ENCODE measurements at regions of chr14 and their contacts with region 1.

Region 1: DNA sequence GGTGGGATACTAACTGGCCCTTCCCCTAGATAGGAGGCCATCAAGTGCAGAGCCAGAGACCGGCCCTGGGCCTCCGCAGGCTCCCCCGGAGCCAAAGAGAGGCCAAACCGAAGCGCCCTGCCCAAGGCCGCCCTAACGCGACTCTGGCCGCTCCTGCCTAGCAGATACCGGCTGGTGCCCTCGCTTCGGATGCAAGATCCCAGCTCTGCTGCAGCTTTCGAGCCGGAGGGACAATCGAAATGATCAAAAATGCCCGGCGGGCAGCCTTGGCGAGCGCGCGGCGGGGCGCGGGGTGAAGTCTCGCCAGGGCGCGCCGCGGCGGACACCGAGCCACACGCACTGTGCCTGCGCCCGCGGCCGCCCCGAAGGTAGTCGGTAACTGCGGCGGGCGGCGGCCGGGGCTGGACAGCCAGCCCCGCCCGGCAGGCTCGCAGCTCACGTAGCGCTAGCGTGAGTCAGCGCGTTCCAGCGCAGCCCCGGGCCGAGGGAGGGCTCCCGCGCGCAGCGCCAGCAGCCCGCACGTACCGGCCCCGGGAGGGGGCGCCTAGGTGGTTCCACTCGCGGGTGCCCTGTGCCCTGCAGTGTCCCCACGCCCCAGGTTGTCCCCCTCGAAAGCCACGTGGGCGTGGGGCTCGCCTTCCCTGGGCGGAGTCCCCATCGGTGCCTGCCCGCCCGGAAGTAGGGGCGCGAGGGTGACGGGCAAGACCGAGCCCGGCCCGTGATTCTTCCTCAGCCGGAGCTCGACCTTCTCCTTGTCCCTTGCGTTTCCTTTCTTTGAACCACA is 109.2 kb upstream of the EGLN3 start:
- DNase-seq: peak; percentile 82 to 88
- H3K4me3 ChIP-seq: peak overlapping the region; percentile 65
- H3K4me3 Mint-ChIP-seq: peak overlapping the region; percentile 89
- H3K27ac Mint-ChIP-seq: peak overlapping the region; percentile 96
- H3K4me1 ChIP-seq: peaks cover 19% of the 10 kb centered on the region
- H3K4me1 Mint-ChIP-seq: peaks cover 7% of the 10 kb centered on the region
- H3K27me3 ChIP-seq: no peaks in the 10 kb centered on the region
- H3K27me3 Mint-ChIP-seq: no peaks in the 10 kb centered on the region
- CTCF ChIP-seq: peak in 1 of 2 experiments; percentile 18

Region 2: DNA sequence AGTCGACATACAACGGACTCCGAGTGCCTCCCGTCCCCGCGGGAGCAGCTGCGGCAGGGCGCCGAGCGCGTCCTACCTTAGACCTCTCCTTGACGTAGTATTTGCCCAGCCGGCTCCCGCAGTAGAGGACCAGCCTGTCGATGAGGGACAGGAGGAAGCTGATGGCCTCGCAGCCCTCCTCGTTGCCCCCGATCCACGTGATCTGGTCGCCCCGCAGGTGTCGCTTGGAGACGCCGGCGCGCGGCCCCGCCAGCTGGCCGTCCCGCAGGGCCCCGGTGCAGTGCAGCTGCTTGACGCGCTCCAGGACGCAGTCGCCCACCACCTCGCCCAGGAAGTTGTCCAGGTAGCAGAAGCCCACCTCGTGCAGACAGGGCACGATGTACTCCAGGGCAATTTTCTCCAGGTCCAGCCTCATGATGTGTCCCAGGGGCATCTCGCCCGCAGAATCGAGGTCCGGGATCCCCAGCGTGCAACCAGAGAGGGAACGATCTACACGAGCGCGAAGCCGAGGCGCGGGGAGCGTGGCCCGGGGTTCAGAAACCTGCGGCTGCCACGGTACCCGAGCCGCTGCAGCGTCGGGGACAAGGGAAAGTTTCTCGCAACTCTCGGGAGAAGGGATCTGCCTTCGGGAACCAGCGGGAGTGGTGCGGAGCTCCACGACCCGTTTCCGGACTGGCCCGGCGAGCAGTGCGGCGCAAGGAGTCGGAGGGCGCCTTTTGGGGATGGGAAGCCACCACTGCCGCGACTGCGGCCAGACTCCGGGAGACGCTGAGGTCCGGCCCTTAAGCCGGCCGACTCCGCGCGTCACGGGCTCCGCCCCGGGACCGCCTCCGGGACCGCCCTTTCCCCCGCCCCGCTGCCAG is 109.5 kb before region 1 on chr14 and contains the start of gene EGLN3:
- CTCF ChIA-PET with region 1: no interaction called
- POLR2A ChIA-PET with region 1: no interaction called
- intact Hi-C with region 1: loop called (anchors 2 kb)
- DNase-seq: peak; percentile 90 to 94
- H3K4me3 ChIP-seq: peak within 1 kb of the TSS; percentile 57
- H3K4me3 Mint-ChIP-seq: peak within 1 kb of the TSS; percentile 92
- H3K27ac Mint-ChIP-seq: peak within 1 kb of the TSS; percentile 70
- H3K4me1 ChIP-seq: peaks cover 9% of the 10 kb centered on the region
- H3K4me1 Mint-ChIP-seq: peaks cover 10% of the 10 kb centered on the region
- H3K27me3 ChIP-seq: no peaks in the 10 kb centered on the region
- H3K27me3 Mint-ChIP-seq: no peaks in the 10 kb centered on the region
- CTCF ChIP-seq: no peak
- total RNA-seq, gene EGLN3: 9.5 and 12.0 TPM in 2 replicates

Region 3: GRCh38 chr14:34161351-34162082 is 101.5 kb after region 1 on chr14:
- CTCF ChIA-PET with region 1: no interaction called
- POLR2A ChIA-PET with region 1: interaction called, 12 read pairs
- intact Hi-C with region 1: no loop called
- DNase-seq: no peak
- H3K4me3 ChIP-seq: no peak overlapping the region
- H3K4me3 Mint-ChIP-seq: no peak overlapping the region
- H3K27ac Mint-ChIP-seq: no peak overlapping the region
- H3K4me1 ChIP-seq: no peaks in the 10 kb centered on the region
- H3K4me1 Mint-ChIP-seq: no peaks in the 10 kb centered on the region
- H3K27me3 ChIP-seq: no peaks in the 10 kb centered on the region
- H3K27me3 Mint-ChIP-seq: no peaks in the 10 kb centered on the region
- CTCF ChIP-seq: no peak